Right cardiac atrium (tissue), 5 donors: ENCODE measurements at regions of chr22 and their contacts with region 1.

Region 1: GRCh38 chr22:45268958-45269844 is 15.5 kb upstream of the UPK3A start:
- DNase-seq: peak; percentile 87 to 95 (median 94)
- ATAC-seq: peak; percentile 84 to 87
- H3K4me3 ChIP-seq: peak overlapping the region; percentile 21
- H3K27ac ChIP-seq: no peak overlapping the region
- H3K4me1 ChIP-seq: no peaks in the 10 kb centered on the region
- H3K27me3 ChIP-seq: no peaks in the 10 kb centered on the region

Region 2: DNA sequence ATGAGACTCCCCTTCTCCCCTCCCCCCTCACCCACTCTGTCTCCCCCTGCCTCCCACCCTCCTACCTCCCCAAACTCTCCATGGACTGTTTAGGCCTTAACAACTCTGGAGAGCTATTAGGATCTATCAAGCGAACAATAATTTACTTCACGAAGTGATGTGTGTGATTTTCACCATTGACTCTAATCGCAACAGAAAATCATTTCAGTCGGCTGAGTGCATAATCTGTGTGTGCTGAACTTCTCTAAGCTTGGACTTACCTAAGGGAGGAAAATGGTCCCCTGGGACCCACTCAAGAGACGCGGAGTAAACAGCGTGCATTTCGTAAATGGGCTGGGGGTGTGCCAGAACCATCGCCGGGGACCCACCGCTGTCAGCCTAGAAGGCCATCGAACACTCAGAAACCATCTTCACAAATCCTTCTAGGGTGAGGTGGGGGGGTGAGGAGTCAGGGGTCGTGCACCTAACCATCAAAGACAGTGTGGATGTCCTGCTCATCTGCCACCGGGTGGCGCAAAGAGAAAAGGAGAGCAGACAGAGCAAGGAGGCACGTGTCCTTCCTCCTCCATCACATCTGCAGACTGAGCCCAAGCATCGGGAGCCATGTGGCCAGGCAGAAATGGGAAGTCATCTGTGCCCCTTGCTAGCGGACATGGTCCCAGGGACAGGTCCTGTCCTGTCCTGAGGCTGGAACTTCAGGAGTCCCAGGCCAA is 167.5 kb before region 1 on chr22:
- intact Hi-C with region 1: loop called in 1 of 4 experiments (anchors 10 kb)
- DNase-seq: peak; percentile 43 to 73 (median 70)
- ATAC-seq: peak; percentile 55 to 60
- H3K4me3 ChIP-seq: no peak overlapping the region
- H3K27ac ChIP-seq: no peak overlapping the region
- H3K4me1 ChIP-seq: no peaks in the 10 kb centered on the region
- H3K27me3 ChIP-seq: no peaks in the 10 kb centered on the region

Region 3: DNA sequence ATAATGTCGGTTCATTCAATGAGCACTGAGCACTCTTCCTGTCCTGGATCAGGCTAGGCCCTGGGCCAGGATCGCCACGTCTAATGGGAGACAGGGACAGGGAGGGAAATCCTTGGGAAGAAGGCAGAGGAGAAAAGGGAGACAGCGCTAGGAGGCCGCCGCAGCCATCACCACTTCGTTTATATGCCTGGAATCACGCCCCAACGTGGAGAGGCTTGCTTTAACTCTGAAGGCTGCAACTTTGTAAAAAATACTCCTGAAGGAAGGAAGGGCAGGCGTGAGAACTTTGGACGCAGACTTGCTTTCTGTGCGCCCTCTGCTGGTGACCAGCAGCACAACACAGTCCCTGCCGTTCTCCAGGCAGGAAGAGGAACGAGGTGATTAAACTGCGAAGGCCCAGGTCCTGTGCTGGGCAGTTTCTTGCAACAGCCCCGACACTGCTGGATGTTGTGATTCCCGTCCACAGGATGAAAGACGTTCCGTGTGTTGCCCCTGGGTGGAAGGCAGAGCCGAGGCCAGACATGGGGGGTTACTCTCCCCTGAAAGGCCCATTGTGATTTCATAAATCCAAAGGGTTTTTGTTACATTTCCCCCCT is 166.4 kb after region 1 on chr22:
- intact Hi-C with region 1: loop called (anchors 1 to 5 kb)
- DNase-seq: peak; percentile 87 to 95 (median 94)
- ATAC-seq: peak; percentile 94 to 95
- H3K4me3 ChIP-seq: peak overlapping the region; percentile 35
- H3K27ac ChIP-seq: peak overlapping the region; percentile 70
- H3K4me1 ChIP-seq: peaks cover 4% of the 10 kb centered on the region
- H3K27me3 ChIP-seq: no peaks in the 10 kb centered on the region

Region 4: DNA sequence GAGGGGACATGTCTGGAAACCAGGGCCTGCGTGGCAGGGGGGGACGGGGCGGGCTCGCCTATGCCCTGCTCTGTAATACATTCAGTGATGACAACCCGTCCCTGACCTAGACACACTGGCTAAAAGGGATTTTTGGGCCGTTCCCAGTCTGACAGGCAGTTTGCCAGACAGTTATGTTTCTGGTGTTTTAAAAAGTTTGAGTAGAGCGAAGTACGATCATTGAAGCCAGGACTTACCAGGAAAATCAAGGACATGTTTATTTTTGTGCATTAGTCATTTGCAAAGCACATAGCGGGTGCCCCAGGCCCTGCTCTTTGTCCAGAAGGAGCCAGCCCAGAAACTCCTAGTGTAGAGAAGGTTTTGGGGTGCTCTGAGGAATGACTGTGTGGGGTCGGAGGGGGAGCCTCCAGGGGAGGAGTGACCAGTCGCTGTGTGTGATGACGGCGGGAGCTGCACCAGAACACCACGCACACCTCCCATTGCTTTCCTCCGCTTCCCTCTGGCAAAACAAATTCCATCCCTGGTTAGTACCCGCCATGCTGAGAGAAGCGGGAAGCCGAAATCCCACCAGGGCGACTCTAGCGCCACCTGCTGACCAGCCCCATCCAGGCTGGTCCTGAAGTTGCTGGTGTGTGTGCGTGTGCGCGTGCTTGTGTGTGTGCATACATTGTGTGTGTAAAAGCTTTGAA is 284.3 kb after region 1 on chr22:
- intact Hi-C with region 1: loop called (anchors 5 to 10 kb)
- DNase-seq: peak; percentile 79 to 91 (median 90)
- ATAC-seq: peak; percentile 67 to 73
- H3K4me3 ChIP-seq: no peak overlapping the region
- H3K27ac ChIP-seq: peak overlapping the region; percentile 51
- H3K4me1 ChIP-seq: peaks cover 8% of the 10 kb centered on the region
- H3K27me3 ChIP-seq: no peaks in the 10 kb centered on the region